ENCODE measurements at regions of chr15 and their contacts with region 1.

Region 1: GRCh38 chr15:71443538-71443937 is 328.3 kb downstream of the THSD4 start:
- DNase-seq: peak; percentile 73
- ATAC-seq: peak; percentile 15

Region 2: GRCh38 chr15:70882361-70882760 is 561.2 kb before region 1 on chr15:
- intact Hi-C with region 1: no loop called
- DNase-seq: no peak
- ATAC-seq: no peak

Region 3: DNA sequence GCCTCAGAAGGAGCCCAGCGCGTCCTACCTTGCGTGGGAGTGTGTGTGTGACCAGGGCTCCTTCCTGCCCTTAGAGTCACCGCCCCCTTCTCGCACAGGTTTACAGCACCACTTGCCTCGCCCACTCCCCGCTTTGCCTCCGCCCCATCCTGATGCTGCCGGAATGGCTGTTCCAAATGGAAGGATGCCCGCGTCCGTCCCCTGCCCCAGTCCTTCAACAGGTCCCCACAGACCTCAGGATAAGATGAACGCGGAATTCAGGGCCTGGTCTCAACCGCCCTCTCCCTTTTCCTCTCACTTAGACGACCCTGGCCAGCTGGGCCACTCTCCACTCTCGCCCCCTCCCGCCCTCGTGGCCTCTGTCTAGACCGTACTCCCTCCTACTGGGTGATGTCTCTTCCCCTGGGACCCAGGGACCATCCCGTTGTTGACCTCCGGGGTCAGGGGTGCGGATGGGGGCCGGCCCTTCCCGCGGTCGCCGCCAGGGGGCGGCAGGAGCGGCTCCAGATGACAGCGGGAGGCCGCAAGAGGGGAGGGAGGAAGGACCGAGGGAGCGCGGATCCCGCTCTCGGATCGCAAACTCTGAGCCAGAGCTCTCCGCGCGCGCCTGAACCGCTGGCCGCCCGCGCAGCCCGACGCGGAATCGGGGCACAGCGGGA is 328.5 kb before region 1 on chr15 and contains the start of gene THSD4:
- intact Hi-C with region 1: loop called (anchors 5 kb)
- DNase-seq: peak; percentile 88
- ATAC-seq: peak; percentile 57
- total RNA-seq, gene THSD4: 80.7 TPM

Region 4: GRCh38 chr15:71386448-71387236 is 56.9 kb before region 1 on chr15:
- intact Hi-C with region 1: loop called (anchors 5 kb)
- DNase-seq: no peak
- ATAC-seq: peak; percentile 52

Region 5: GRCh38 chr15:71921191-71921590 is 477.7 kb after region 1 on chr15:
- intact Hi-C with region 1: no loop called
- DNase-seq: no peak
- ATAC-seq: no peak

Measured in left ventricle myocardium superior (tissue), 1 donor.